ENCODE measurements at regions of chr4 and their contacts with region 1.

Region 1: GRCh38 chr4:48047421-48047844 is 30.9 kb downstream of the NIPAL1 start:
- DNase-seq: peak; percentile 90
- H3K4me3 ChIP-seq: peak overlapping the region; percentile 43
- H3K27ac ChIP-seq: peak overlapping the region; percentile 85
- H3K4me1 ChIP-seq: peaks cover 76% of the 10 kb centered on the region
- CTCF ChIP-seq: no peak

Region 2: DNA sequence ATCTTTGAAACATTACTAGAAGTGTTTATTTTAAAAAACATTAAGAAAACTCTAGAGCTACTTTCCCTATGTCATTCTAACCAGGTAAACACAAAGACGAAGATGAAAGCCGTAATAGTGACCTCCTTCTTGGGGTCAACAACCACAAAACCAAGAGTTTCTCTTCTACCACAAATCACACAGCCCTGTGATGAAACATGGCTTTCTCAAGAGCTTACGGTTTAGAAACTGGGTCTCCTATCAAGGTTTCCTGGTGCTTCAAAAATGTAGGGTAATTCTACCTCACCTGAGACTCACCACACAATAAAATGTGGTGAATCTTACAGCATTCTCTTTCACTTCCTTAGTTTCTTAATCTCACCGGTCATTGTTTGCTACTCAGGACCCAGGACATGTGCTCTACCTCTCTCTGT is 260.5 kb before region 1 on chr4:
- CTCF ChIA-PET with region 1: no interaction called
- POLR2A ChIA-PET with region 1: no interaction called
- intact Hi-C with region 1: no loop called
- DNase-seq: no peak
- H3K4me3 ChIP-seq: no peak overlapping the region
- H3K27ac ChIP-seq: no peak overlapping the region
- H3K4me1 ChIP-seq: no peaks in the 10 kb centered on the region
- CTCF ChIP-seq: no peak

Region 3: DNA sequence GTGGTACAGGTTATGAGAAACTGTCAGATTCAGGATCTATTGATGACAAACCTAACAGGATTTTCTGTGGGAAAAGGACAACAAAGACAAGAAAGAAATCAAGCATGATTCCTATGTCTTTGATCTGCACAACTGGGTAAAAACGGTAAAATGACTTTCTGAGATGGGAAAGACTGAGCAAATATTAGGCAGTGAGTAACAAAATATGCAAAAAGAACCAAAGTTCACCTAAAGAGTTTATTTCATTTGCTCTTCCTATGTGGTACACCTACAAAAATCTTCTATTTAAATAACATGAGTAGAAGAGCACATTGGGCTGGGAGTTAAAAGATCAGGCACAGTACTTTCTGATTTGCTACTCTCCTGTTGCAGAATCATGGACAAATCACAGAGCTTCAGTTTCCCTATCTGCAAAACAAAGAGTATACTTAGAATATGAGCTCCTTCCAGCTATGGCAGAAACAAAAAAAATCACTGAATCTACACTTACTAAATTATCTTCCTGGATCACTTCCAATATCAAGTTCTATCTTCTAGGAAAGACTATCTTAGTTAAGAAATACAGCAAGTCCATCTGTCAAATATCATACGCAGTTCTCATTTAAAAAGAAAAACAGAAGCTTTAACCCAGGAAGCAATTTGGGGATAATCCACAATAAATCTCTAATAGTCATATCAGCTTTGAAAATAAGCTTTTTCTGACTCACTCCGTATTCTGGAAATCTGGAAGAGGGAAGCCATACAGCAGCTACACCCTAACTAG is 170.5 kb before region 1 on chr4:
- CTCF ChIA-PET with region 1: no interaction called
- POLR2A ChIA-PET with region 1: no interaction called
- intact Hi-C with region 1: no loop called
- DNase-seq: no peak
- H3K4me3 ChIP-seq: no peak overlapping the region
- H3K27ac ChIP-seq: no peak overlapping the region
- H3K4me1 ChIP-seq: no peaks in the 10 kb centered on the region
- CTCF ChIP-seq: no peak

Region 4: DNA sequence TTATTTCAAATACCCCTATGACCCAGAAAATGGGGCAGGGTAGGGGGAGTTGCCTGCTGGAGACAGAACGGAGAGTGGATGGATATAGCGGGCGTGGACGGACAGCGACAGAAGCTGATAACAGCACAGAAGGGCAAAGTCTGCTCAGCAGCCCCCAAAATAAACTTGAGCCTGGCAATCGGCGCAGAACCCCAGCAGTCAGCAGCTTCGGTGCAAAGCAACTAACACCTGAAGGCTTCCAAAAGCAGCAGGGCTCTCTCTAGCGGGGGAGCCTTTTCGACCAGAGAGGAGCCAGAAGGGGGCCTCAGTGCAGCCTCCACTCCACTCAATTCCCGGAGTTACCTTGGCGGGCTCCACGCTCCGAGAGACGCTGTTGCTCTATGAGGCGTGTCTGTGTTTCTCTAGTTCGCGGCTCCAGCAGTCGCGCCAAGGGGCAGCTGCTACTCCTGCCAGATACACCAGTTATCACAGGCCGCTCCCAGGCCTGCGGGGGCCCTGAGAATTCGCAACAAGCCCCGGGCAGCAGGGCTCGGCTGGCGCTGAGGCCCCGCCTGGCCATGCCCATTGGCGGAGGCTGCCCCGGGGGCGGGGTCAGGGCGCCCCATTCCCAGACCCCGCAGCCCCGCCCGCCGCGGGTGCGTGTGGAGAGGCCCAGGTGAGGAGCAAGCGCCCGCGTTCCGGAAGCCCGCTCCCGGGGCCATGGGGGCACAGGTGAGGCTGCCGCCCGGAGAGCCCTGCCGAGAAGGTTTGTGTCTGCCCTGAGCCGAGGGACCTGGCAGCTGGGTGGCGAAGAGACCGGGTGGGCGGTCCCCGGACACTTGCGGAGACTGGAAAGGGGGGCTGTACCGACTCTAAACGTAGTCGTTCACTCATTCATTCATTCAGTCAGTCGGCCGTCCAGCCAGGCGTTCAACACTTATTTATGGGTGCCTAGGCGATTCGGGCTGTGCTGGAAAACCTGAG is 31.0 kb before region 1 on chr4 and contains the starts of genes CNGA1 and NIPAL1:
- CTCF ChIA-PET with region 1: no interaction called
- POLR2A ChIA-PET with region 1: interaction called, 6 read pairs
- intact Hi-C with region 1: loop called (anchors 2 kb)
- DNase-seq: peak; percentile 77
- H3K4me3 ChIP-seq: peak within 1 kb of the TSS; percentile 73
- H3K27ac ChIP-seq: no peak within 1 kb of the TSS
- H3K4me1 ChIP-seq: peaks cover 9% of the 10 kb centered on the region
- CTCF ChIP-seq: peak; percentile 81
- total RNA-seq, gene CNGA1: not detected in 2 replicates
- total RNA-seq, gene NIPAL1: 0.28 and 1.1 TPM in 2 replicates

Region 5: DNA sequence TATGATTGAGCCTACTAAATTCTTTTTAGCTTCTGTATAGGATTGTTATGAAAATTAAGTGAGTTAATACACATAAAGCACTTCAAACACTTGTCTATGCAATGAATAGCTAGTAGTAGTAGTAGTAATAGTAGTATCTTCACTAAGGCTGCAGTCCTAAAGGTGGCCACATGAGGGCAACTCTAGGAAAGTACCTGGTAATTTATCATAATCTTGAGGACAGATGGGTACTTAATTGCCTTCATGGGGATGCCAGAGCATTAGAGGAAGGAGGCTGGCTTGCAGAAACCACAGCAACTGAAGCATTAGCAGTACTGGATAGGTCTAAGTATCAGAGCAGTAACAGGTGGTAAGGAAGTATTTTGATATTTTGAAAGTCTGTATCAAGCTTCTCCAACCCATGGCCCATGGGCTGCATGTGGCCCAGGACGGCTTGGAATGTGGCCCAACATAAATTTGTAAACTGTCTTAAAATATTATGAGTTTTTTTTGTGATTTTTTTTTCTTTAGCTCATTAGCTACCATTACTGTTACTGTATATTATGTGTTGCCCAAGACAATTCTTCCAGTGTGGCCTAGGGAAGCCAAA is 13.5 kb before region 1 on chr4:
- CTCF ChIA-PET with region 1: interaction called, 23 read pairs
- POLR2A ChIA-PET with region 1: interaction called, 194 read pairs
- intact Hi-C with region 1: loop called (anchors 1 kb)
- DNase-seq: peak; percentile 79
- H3K4me3 ChIP-seq: no peak overlapping the region
- H3K27ac ChIP-seq: peak overlapping the region; percentile 7
- H3K4me1 ChIP-seq: peaks cover 71% of the 10 kb centered on the region
- CTCF ChIP-seq: peak; percentile 88

Region 6: DNA sequence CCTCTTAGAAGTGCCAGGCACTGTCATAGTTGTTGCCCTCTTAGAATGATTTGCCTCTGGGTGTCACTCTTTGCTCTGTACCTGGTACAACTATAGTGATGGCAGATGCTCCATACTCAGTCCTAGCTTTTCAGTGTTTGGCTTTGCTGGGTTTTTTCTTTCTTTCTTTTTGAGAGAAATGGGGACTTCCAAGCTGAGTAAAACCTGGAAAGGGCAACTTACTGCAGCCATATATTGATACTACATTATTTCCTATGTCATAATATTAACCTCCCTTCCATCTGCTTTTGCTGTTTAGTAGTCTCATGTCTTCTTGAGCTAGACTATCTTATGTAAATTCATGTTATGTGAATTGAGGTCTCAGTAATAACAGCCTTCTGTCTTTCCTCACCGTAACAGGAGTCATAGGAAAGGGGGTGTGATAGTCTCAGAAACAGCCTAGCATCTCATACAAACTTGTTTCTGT is 18.2 kb after region 1 on chr4:
- CTCF ChIA-PET with region 1: no interaction called
- POLR2A ChIA-PET with region 1: interaction called, 4 read pairs
- intact Hi-C with region 1: loop called (anchors 1 kb)
- DNase-seq: no peak
- H3K4me3 ChIP-seq: no peak overlapping the region
- H3K27ac ChIP-seq: no peak overlapping the region
- H3K4me1 ChIP-seq: no peaks in the 10 kb centered on the region
- CTCF ChIP-seq: no peak

Measured in OCI-LY7 (cell line).